ENCODE measurements at regions of chr4 and their contacts with region 1.

Region 1: GRCh38 chr4:85747882-85748491 is 273.0 kb downstream of the ARHGAP24 start:
- DNase-seq: no peak
- ATAC-seq: peak; percentile 73
- H3K4me3 Mint-ChIP-seq: no peak overlapping the region
- H3K27ac Mint-ChIP-seq: peak overlapping the region; percentile 41
- H3K4me1 Mint-ChIP-seq: peaks cover 73% of the 10 kb centered on the region
- H3K27me3 Mint-ChIP-seq: no peaks in the 10 kb centered on the region
- CTCF ChIP-seq: peak; percentile 28

Region 2: DNA sequence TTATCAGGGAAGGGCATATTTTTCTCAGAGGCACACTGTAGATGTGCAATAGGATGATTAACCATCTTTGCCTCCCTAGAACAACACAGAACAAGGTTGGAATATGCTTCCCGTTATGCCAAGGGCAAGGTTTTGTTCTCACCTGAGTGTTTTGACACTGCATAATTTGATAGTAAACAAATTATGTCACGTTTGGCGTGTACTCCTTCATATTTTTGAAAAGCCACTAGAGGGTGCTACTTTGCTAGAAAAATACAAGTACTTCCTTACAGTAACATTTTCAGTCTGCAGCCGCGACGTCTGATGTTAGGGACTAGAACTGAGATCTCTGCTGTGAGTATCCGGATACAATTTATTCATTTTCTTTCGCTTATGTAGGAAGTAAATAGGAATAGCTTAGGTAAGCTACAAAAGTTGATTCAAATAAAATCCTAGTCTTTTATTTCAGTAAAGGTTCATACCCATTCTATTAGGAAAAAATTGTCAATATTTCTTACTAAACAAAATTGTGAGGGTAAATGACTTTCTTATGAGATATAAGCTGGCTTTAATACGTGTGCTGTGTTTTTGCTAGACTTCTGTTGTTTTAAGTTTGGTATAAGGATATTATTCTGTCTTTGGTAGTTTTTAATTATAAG is 600.4 kb before region 1 on chr4:
- CTCF ChIA-PET with region 1: interaction called, 78 read pairs
- POLR2A ChIA-PET with region 1: no interaction called
- intact Hi-C with region 1: loop called (anchors 1 kb)
- DNase-seq: no peak
- ATAC-seq: peak; percentile 86
- H3K4me3 Mint-ChIP-seq: no peak overlapping the region
- H3K27ac Mint-ChIP-seq: no peak overlapping the region
- H3K4me1 Mint-ChIP-seq: peaks cover 5% of the 10 kb centered on the region
- H3K27me3 Mint-ChIP-seq: no peaks in the 10 kb centered on the region
- CTCF ChIP-seq: peak; percentile 40

Region 3: DNA sequence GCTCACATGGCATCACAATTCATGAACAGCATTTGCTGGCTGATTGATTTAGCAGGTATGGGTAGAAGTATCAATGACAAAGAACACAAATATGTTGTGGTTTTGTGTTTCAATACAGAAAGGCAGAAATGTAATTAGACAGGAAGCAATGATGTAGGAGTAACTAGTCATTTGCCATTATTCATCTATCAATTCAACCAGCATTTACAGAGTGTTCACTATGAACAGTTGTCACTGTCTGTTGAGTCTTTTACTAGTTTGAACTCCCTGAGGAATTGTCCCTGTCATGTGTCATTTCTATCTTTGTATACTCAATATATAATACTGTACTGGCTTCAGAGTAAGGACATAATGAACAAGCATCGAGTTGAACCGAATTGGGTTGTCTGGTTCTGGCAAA is 324.6 kb before region 1 on chr4:
- CTCF ChIA-PET with region 1: interaction called, 8 read pairs
- POLR2A ChIA-PET with region 1: no interaction called
- intact Hi-C with region 1: loop called (anchors 1 kb)
- DNase-seq: no peak
- ATAC-seq: peak; percentile 73
- H3K4me3 Mint-ChIP-seq: no peak overlapping the region
- H3K27ac Mint-ChIP-seq: no peak overlapping the region
- H3K4me1 Mint-ChIP-seq: peaks cover 16% of the 10 kb centered on the region
- H3K27me3 Mint-ChIP-seq: no peaks in the 10 kb centered on the region
- CTCF ChIP-seq: no peak

Region 4: DNA sequence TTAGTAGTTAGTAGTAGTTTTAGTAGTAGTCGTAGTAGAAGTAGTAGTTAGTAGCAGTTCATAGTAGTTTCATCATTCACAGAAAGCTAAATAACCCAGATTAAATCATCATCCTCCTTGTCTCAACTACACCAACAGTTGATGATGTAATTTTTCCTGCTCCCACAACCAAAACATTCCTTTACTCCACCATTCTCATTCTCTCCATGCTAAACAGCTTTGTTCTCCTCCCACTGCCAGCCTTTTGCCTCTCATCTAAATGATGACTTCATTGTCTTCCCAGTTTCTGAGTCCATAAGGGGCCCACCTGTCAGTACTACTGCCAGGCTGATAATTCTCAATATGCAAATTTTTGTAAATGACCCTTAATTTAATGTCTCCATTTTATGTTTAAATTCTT is 204.2 kb before region 1 on chr4:
- CTCF ChIA-PET with region 1: interaction called, 13 read pairs
- POLR2A ChIA-PET with region 1: no interaction called
- intact Hi-C with region 1: loop called (anchors 1 kb)
- DNase-seq: no peak
- ATAC-seq: no peak
- H3K4me3 Mint-ChIP-seq: no peak overlapping the region
- H3K27ac Mint-ChIP-seq: no peak overlapping the region
- H3K4me1 Mint-ChIP-seq: peaks cover 36% of the 10 kb centered on the region
- H3K27me3 Mint-ChIP-seq: no peaks in the 10 kb centered on the region
- CTCF ChIP-seq: no peak

Region 5: DNA sequence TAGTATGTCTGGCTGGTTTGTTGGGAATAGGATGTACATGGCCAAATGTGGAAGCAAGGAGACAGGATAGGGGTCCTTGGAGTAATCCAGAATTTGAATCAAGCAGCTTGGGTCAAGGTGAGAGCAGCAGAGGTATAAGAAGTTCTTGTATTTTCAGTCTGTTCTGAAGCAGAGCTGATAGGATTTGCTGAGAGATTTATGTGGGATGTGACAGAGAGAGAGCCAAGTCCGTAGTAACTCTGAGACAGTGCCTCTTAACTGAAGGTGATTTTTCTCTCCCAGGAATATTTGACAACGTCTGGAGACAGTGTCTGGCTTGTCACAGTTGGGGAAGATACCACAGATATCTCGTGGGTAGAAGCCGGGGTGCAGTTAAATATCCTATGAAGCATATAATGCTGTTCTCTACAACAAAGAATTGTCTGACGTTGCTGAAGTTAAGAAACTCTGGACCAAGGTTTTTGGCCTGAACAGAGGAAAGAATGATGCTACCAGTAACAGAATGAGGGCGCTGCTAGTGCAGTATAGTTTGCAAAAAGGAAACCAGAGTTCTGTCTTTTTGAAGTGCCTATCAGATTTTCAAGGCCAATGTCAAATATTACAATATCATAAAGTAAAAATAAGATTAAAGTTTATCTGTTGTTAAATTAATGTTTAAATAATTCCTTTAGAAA is 89.1 kb before region 1 on chr4:
- CTCF ChIA-PET with region 1: interaction called, 7 read pairs
- POLR2A ChIA-PET with region 1: interaction called, 6 read pairs
- intact Hi-C with region 1: loop called (anchors 1 kb)
- DNase-seq: no peak
- ATAC-seq: no peak
- H3K4me3 Mint-ChIP-seq: peak overlapping the region; percentile 5
- H3K27ac Mint-ChIP-seq: peak overlapping the region; percentile 89
- H3K4me1 Mint-ChIP-seq: peaks cover 52% of the 10 kb centered on the region
- H3K27me3 Mint-ChIP-seq: no peaks in the 10 kb centered on the region
- CTCF ChIP-seq: no peak

Region 6: GRCh38 chr4:85778632-85779131 is 30.7 kb after region 1 on chr4:
- CTCF ChIA-PET with region 1: interaction called, 13 read pairs
- POLR2A ChIA-PET with region 1: interaction called, 4 read pairs
- intact Hi-C with region 1: no loop called
- DNase-seq: no peak
- ATAC-seq: peak; percentile 61
- H3K4me3 Mint-ChIP-seq: peak overlapping the region; percentile 91
- H3K27ac Mint-ChIP-seq: peak overlapping the region; percentile 93
- H3K4me1 Mint-ChIP-seq: peaks cover 69% of the 10 kb centered on the region
- H3K27me3 Mint-ChIP-seq: no peaks in the 10 kb centered on the region
- CTCF ChIP-seq: no peak